CD8-positive, alpha-beta memory T cell (primary cell): ENCODE measurements at regions of chr1 and their contacts with region 1.

Region 1: GRCh38 chr1:205430696-205431305 is 8.9 kb upstream of the LEMD1 start:
- DNase-seq: peak; percentile 42 to 76 (median 55)
- H3K4me3 ChIP-seq: peak overlapping the region; percentile 52
- H3K4me3 Mint-ChIP-seq: peak overlapping the region; percentile 72 to 91 (median 84)
- H3K27ac ChIP-seq: no peak overlapping the region
- H3K27ac Mint-ChIP-seq: peak overlapping the region in 6 of 8 donors; percentile 42 to 87 (median 64)
- H3K4me1 ChIP-seq: peaks cover 5% of the 10 kb centered on the region
- H3K4me1 Mint-ChIP-seq: peaks cover 11 to 19% (median 14%) of the 10 kb centered on the region in 3 donors
- H3K27me3 ChIP-seq: no peaks in the 10 kb centered on the region
- H3K27me3 Mint-ChIP-seq: peaks cover 8 to 13% of the 10 kb centered on the region in 2 donors

Region 2: DNA sequence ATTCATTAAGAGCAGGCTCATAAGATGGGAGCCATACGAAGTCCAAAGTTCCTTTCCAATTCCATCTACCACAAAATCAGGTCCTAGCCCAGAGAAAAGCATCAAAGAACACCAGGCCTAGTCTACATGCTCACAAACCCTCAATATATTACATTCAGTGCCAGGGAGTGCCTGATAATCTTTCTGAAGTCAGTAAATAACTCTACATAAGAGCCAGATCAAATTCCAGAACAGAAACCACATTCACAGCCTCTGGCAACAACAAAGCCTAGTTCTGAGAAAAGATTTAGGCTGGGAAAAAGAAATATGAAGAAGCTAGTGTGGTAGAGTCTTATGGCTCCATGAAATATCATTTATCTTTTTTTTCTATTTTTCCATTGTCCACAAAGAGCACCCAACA is 268.5 kb before region 1 on chr1:
- CTCF ChIA-PET with region 1: no interaction called
- POLR2A ChIA-PET with region 1: no interaction called
- DNase-seq: no peak
- H3K4me3 ChIP-seq: no peak overlapping the region
- H3K4me3 Mint-ChIP-seq: no peak overlapping the region
- H3K27ac ChIP-seq: no peak overlapping the region
- H3K27ac Mint-ChIP-seq: no peak overlapping the region
- H3K4me1 ChIP-seq: no peaks in the 10 kb centered on the region
- H3K4me1 Mint-ChIP-seq: peaks cover 0 to 3% (median under 1%) of the 10 kb centered on the region in 3 donors
- H3K27me3 ChIP-seq: no peaks in the 10 kb centered on the region
- H3K27me3 Mint-ChIP-seq: peaks cover 0 to 1% of the 10 kb centered on the region in 2 donors

Region 3: GRCh38 chr1:205396967-205397616 is 33.7 kb before region 1 on chr1:
- CTCF ChIA-PET with region 1: interaction called, 16 read pairs
- POLR2A ChIA-PET with region 1: no interaction called
- DNase-seq: peak in 4 of 5 donors; percentile 6 to 53 (median 36)
- H3K4me3 ChIP-seq: no peak overlapping the region
- H3K4me3 Mint-ChIP-seq: no peak overlapping the region
- H3K27ac ChIP-seq: no peak overlapping the region
- H3K27ac Mint-ChIP-seq: peak overlapping the region in 1 of 8 donors; percentile 54
- H3K4me1 ChIP-seq: no peaks in the 10 kb centered on the region
- H3K4me1 Mint-ChIP-seq: peaks cover 7 to 10% (median 10%) of the 10 kb centered on the region in 3 donors
- H3K27me3 ChIP-seq: no peaks in the 10 kb centered on the region
- H3K27me3 Mint-ChIP-seq: peaks cover 8 to 21% of the 10 kb centered on the region in 2 donors

Region 4: GRCh38 chr1:205416322-205416721 is 14.5 kb before region 1 on chr1:
- CTCF ChIA-PET with region 1: interaction called, 19 read pairs
- POLR2A ChIA-PET with region 1: no interaction called
- DNase-seq: no peak
- H3K4me3 ChIP-seq: no peak overlapping the region
- H3K4me3 Mint-ChIP-seq: no peak overlapping the region
- H3K27ac ChIP-seq: no peak overlapping the region
- H3K27ac Mint-ChIP-seq: peak overlapping the region in 1 of 8 donors; percentile 21
- H3K4me1 ChIP-seq: no peaks in the 10 kb centered on the region
- H3K4me1 Mint-ChIP-seq: no peaks in the 10 kb centered on the region
- H3K27me3 ChIP-seq: no peaks in the 10 kb centered on the region
- H3K27me3 Mint-ChIP-seq: peaks cover 3 to 10% of the 10 kb centered on the region in 2 donors

Region 5: DNA sequence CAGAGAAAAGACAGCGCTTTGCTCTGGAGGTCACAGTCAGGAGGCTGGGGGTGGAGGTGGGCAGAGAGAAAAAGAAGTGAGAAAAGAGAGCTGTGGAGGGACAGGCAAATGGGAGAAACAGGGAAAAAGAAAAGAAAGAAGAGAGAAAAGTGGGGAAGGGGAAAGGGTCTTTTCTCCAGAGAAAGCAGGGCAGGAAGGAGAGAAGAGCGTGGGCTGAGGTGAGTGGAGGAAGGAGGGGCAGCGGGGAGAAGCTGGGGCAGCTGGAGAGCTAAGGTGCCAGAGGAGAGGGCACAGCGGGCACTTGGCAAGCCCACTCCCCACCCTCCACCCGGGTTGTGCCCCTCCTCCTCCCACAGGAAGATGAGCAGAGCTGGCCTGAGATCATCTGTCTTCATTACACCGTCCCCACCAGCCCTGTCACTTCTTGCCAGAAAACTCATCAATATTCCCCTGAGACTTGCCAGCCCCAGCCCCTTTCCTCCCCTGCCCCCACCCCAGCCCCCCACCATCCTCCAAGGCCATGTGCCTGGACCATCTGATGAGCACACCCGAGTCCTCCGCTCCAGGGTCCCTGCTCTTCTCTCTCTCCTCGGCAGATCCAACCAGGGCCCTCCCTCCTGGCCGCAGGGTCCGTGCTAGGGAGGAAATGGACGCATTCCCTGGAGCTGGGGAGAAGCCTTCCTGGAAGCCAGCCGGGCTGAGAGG is 42.1 kb after region 1 on chr1:
- CTCF ChIA-PET with region 1: no interaction called
- POLR2A ChIA-PET with region 1: no interaction called
- DNase-seq: peak in 1 of 5 donors; percentile 16
- H3K4me3 ChIP-seq: no peak overlapping the region
- H3K4me3 Mint-ChIP-seq: no peak overlapping the region
- H3K27ac ChIP-seq: no peak overlapping the region
- H3K27ac Mint-ChIP-seq: peak overlapping the region in 2 of 8 donors; percentile 32 to 34
- H3K4me1 ChIP-seq: no peaks in the 10 kb centered on the region
- H3K4me1 Mint-ChIP-seq: peaks cover 9 to 22% (median 11%) of the 10 kb centered on the region in 3 donors
- H3K27me3 ChIP-seq: peaks cover 8% of the 10 kb centered on the region
- H3K27me3 Mint-ChIP-seq: peaks cover 15 to 28% of the 10 kb centered on the region in 2 donors